ENCODE measurements at regions of chr11 and their contacts with region 1.

Region 1: DNA sequence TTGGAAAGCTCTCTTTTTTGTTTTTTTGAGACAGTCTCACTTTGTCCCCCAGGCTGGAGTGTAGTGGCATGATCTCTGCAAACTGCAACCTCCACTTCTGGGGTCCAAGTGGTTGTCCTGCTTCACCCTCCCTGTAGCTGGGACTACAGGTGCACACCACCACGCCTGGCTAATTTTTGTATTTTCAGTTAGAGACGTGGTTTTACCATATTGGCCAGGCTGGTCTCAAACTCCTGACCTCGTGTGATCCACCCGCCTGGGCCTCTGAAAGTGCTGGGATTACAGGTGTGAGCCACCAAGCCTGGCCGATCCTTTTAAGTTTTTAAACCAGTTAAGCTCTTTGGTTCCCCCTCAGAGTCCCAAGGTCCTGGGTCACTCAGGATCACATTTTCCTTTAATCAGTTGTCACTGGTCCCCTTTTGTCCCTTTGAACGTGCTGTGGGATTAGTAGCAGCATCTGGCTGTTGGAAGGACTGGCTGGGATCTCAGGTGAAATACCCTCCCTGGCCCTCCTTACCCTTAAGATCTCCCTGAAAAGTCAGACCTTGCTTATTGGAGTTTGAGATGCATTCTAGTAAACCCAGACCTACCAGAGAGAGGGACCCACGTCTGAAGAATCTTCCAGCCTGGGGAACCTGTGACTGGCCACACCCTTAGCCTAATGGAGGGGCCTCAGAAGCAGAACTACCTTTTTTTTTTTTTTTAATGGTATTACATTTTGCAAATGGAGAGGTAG is 8.1 kb downstream of the MALAT1 start:
- DNase-seq: no peak
- H3K4me3 ChIP-seq: peak overlapping the region; percentile 23; the same call in 1 of the 2 replicates
- H3K27ac ChIP-seq: peak overlapping the region; percentile 97
- H3K4me1 ChIP-seq: peaks cover 56% of the 10 kb centered on the region
- H3K27me3 ChIP-seq: no peaks in the 10 kb centered on the region
- CTCF ChIP-seq: no peak

Region 2: GRCh38 chr11:65382033-65382807 is 124.7 kb before region 1 on chr11 and contains the start of gene SLC25A45:
- CTCF ChIA-PET with region 1: interaction called, 4 read pairs
- POLR2A ChIA-PET with region 1: interaction called, 40 read pairs
- intact Hi-C with region 1: loop called (anchors 1 kb)
- DNase-seq: peak; percentile 97 to 98
- H3K4me3 ChIP-seq: peak within 1 kb of the TSS; percentile 48; the same call in 1 of the 2 replicates
- H3K27ac ChIP-seq: peak within 1 kb of the TSS; percentile 93
- H3K4me1 ChIP-seq: peaks cover 64% of the 10 kb centered on the region
- H3K27me3 ChIP-seq: no peaks in the 10 kb centered on the region
- CTCF ChIP-seq: peak; percentile 79
- total RNA-seq, gene SLC25A45: 9.5 and 9.8 TPM in 2 replicates

Region 3: DNA sequence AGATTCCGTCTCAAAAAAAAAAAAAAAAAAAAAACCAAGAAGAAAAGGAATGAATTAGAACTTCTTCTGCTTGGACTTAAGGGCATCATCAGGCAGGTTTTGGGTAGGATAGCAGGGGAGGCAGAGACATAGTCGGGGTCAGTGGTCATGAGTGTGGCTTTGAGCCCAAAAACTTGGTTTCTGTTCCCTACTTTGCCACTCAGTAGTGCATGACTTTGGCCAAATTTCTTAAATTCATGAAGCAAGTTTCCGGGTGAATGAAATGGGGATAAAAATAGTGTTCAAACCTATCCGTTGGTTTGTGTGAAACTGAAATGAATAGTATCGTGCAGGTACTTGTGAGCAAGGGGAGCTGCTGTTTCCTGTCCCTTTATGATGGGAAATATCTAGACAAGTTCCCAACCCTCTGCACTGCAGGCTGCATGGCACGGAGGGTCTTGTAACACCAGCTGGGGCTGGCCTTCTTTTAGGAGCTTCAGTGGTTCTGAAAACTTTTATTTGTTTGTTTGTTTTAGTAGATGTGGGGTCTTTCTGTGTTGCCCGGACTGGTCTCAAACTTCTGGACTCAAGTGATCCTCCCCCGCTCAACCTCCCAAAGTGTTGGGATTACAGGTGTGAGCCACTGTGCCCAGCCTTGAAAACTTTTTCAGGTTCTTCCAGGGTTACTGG is 66.0 kb before region 1 on chr11:
- CTCF ChIA-PET with region 1: interaction called, 3 read pairs
- POLR2A ChIA-PET with region 1: interaction called, 19 read pairs
- intact Hi-C with region 1: loop called (anchors 2 kb)
- DNase-seq: peak; percentile 22 to 35
- H3K4me3 ChIP-seq: no peak overlapping the region
- H3K27ac ChIP-seq: peak overlapping the region; percentile 64
- H3K4me1 ChIP-seq: peaks cover 50% of the 10 kb centered on the region
- H3K27me3 ChIP-seq: no peaks in the 10 kb centered on the region
- CTCF ChIP-seq: no peak

Region 4: DNA sequence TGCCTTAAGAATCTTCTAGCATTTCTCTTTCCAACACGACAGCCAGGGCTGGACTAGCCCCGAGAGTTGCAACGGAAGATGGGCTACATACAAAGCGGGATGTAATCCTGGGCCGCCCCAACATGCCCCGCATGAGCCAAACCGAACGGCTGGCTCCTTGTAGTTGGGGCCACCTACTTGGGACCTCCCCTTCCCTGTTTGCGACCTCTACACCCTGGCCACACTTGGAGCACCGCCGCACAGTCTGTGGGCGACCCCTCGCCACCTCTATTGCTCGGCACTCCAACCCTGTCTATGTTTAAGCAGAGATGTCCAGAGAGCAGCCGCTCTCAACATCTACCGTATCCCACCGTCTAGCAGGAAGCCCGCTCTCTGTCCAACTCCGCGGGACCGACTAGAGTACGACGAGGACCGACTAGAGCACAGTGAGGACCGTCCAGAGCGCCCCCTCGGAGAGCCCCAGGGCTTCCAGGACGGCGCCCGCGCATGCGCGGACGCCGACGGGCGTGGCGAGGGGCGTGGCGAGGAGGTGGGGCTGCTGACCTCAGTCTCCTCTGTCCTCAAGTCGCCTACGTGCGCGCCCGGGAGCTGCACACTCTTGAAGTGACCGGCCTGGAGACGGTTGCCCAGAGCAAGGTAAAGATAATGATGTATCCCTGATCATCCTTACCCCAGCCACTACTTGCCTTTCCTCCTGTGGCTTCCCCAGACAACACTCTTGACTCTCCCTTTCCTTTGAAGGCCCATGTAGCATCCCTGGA is 52.1 kb before region 1 on chr11:
- CTCF ChIA-PET with region 1: no interaction called
- POLR2A ChIA-PET with region 1: interaction called, 27 read pairs
- intact Hi-C with region 1: no loop called
- DNase-seq: peak; percentile 81 to 91
- H3K4me3 ChIP-seq: peak overlapping the region; percentile 58
- H3K27ac ChIP-seq: peak overlapping the region; percentile 21
- H3K4me1 ChIP-seq: peaks cover 25% of the 10 kb centered on the region
- H3K27me3 ChIP-seq: no peaks in the 10 kb centered on the region
- CTCF ChIP-seq: no peak

Region 5: GRCh38 chr11:65477149-65477965 is 29.6 kb before region 1 on chr11:
- CTCF ChIA-PET with region 1: interaction called, 43 read pairs
- POLR2A ChIA-PET with region 1: interaction called, 84 read pairs
- intact Hi-C with region 1: no loop called
- DNase-seq: peak; percentile 87 to 98
- H3K4me3 ChIP-seq: peak overlapping the region; percentile 74
- H3K27ac ChIP-seq: peak overlapping the region; percentile 88
- H3K4me1 ChIP-seq: peaks cover 61% of the 10 kb centered on the region
- H3K27me3 ChIP-seq: no peaks in the 10 kb centered on the region
- CTCF ChIP-seq: no peak

Region 6: GRCh38 chr11:65524741-65525545 is 18.0 kb after region 1 on chr11 and contains the start of gene SCYL1:
- CTCF ChIA-PET with region 1: no interaction called
- POLR2A ChIA-PET with region 1: interaction called, 15 read pairs
- intact Hi-C with region 1: no loop called
- DNase-seq: peak in 1 of 2 experiments; percentile 82
- H3K4me3 ChIP-seq: peak within 1 kb of the TSS; percentile 100
- H3K27ac ChIP-seq: peak within 1 kb of the TSS; percentile 39; the same call in 1 of the 2 replicates
- H3K4me1 ChIP-seq: peaks cover 13% of the 10 kb centered on the region
- H3K27me3 ChIP-seq: no peaks in the 10 kb centered on the region
- CTCF ChIP-seq: no peak
- total RNA-seq, gene SCYL1: 106 and 135 TPM in 2 replicates

Region 7: DNA sequence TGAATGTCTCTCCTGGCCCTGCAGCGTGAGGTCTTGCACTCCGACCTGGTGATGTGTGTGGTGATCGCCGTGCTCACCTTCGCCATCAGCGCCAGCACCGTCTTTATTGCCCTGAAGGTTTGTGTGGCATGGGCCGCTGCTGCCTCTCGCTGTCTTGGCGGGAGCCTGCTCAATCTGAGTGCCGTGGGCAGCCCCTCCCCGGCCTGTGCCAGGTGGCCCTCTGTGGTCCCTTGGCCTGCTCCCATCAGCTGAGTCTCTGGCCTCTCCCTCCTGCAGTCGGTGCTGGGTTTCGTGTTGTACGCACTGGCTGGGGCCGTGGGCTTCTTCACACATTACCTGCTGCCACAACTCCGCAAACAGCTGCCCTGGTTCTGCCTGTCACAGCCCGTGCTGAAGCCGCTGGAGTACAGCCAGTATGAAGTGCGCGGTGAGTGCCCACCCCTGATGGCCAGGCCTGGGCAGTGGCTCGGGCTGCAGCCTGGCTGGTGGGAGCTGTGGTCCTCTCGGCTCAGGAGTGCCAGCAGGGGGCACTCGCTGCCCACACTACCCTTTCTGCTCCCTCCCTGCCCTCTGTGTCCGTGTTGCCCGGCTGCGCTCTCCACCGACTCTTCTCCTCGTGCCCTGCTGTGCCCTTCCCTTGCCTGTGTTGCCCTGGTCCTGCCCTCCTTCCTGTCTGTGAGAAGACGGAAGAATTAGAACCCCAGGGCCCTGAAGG is 118.8 kb after region 1 on chr11:
- CTCF ChIA-PET with region 1: no interaction called
- POLR2A ChIA-PET with region 1: no interaction called
- intact Hi-C with region 1: no loop called
- DNase-seq: peak in 1 of 2 experiments; percentile 26
- H3K4me3 ChIP-seq: no peak overlapping the region
- H3K27ac ChIP-seq: no peak overlapping the region
- H3K4me1 ChIP-seq: no peaks in the 10 kb centered on the region
- H3K27me3 ChIP-seq: no peaks in the 10 kb centered on the region
- CTCF ChIP-seq: peak; percentile 55

Region 8: DNA sequence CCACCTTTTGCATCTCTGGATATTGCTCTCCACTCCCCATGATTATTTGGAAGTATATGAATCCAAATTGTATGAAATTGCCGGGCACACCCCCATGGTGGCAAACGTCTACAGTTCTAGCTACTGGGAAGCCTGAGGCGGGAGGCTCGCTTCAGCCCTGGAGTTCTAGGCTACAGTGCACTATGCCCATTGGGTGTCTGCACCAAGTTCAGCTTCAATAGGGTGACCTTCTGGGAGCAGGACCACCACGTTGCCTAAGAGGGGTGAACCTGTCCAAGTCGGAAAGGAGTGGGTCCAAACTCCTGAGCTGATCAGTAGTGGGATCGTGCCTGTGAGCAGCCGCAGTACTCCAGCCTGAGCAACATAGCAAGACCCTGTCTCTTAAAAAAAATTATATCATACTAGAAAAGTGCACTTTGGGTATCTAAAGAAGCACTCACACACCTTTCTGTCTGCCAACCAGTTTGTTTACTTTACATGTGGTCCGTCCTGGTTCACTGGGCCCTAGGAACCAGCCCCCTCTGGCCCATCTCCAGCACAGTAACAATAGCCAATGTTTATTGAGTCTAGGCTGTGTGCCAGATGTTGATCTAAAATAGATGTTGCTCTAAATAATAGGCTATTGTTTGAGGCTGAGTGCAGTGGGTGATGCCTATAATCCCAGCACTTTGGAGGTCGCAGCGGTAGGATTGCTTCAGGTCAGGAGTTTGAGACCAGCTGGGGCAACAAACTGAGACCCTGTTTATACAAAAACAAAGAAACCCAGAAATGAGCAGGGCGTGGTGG is 188.7 kb after region 1 on chr11:
- CTCF ChIA-PET with region 1: no interaction called
- POLR2A ChIA-PET with region 1: interaction called, 23 read pairs
- intact Hi-C with region 1: no loop called
- DNase-seq: peak in 1 of 2 experiments; percentile 44
- H3K4me3 ChIP-seq: no peak overlapping the region
- H3K27ac ChIP-seq: no peak overlapping the region
- H3K4me1 ChIP-seq: no peaks in the 10 kb centered on the region
- H3K27me3 ChIP-seq: 0 out of 2 replicates have a peak, but pooled peaks cover 18% of the 10 kb centered on the region
- CTCF ChIP-seq: no peak

Region 9: GRCh38 chr11:65802841-65803240 is 295.9 kb after region 1 on chr11:
- CTCF ChIA-PET with region 1: no interaction called
- POLR2A ChIA-PET with region 1: no interaction called
- intact Hi-C with region 1: no loop called
- DNase-seq: no peak
- H3K4me3 ChIP-seq: no peak overlapping the region
- H3K27ac ChIP-seq: no peak overlapping the region
- H3K4me1 ChIP-seq: no peaks in the 10 kb centered on the region
- H3K27me3 ChIP-seq: no peaks in the 10 kb centered on the region
- CTCF ChIP-seq: no peak